CD8-positive, alpha-beta T cell (primary cell): ENCODE measurements at regions of chr3 and their contacts with region 1.

Region 1: DNA sequence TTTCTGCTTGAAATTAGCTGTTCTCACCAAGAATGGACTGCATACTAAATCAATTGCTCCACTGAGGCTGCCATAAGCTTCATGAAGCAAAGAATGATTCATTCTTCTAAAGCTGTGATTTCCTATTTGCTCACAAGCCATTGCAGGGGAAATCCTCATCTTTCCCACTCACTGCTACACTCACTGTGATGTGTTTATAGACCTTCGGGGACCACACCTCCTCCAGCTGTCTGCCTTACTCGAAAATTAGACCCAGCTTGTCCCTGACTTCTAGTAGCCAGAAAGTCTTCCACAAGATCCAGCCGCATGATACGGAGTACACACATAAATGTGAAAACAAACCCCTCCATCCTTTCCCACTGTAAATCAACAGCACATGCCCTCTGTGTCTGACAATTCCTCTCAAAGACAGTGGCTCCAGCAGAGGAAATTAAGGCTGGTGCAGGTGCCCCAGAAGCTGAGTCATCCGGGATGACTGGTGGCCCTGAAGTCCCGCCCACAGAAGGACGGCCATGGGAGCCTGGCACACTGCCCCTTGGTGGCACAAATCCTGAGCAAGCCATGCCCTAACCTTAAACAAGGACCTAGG is 172.0 kb downstream of the STT3B start:
- DNase-seq: no peak
- ATAC-seq: no peak
- H3K4me3 ChIP-seq: no peak overlapping the region
- H3K4me3 Mint-ChIP-seq: no peak overlapping the region
- H3K27ac ChIP-seq: no peak overlapping the region
- H3K27ac Mint-ChIP-seq: no peak overlapping the region
- H3K4me1 ChIP-seq: no peaks in the 10 kb centered on the region
- H3K4me1 Mint-ChIP-seq: no peaks in the 10 kb centered on the region
- H3K27me3 ChIP-seq: no peaks in the 10 kb centered on the region
- H3K27me3 Mint-ChIP-seq: peaks cover 15% of the 10 kb centered on the region
- CTCF ChIP-seq: no peak

Region 2: DNA sequence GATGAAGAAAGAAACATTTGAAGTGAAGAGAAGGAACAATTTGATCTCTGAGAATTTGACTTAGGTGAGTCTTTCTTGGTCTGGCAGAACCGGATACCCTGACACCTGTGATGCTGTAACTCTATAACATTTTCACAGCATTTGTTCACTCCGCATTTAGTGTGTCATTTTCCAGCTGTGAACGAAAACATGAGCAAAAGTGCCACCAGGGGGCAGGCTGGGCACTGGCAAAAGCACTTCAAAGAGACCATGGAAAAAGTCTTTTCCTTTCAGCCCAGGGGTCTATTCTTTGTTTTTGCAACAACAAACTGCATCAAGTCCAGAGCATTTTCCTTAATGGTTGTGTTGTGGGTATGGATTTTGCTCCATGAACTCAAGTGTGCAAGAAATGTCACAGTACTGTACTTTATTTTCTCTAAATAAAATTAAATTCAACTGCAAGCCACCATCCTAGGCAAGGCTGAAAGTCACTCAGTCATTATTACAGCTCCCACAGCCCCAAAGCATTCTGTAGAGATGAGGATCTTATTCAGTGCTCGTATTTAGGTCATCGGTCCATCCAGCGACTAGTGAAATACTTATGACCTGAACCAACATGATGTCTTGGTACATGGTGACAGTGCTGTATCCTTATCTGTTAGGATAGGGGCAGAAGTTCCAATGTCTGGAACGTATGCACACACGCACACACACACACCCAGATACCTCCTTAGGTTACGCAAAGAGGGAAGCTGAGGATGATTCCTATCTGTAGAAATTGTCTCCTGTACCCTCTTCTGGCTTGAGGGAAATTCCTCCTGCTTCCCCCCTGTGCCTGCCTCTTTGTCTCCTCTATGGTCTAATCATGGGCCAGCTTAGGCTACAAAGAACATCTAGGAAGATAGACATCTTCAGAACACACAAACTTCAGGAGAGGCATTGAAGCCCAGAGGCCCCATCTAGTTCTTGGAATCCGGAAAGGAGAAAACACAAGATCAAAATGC is 935.7 kb before region 1 on chr3:
- CTCF ChIA-PET with region 1: no interaction called
- POLR2A ChIA-PET with region 1: no interaction called
- intact Hi-C with region 1: loop called in 1 of 2 experiments (anchors 5 kb)
- DNase-seq: peak; percentile 34 to 80 (median 68)
- ATAC-seq: peak; percentile 48
- H3K4me3 ChIP-seq: no peak overlapping the region
- H3K4me3 Mint-ChIP-seq: no peak overlapping the region
- H3K27ac ChIP-seq: no peak overlapping the region
- H3K27ac Mint-ChIP-seq: no peak overlapping the region
- H3K4me1 ChIP-seq: no peaks in the 10 kb centered on the region
- H3K4me1 Mint-ChIP-seq: peaks cover 3% of the 10 kb centered on the region
- H3K27me3 ChIP-seq: no peaks in the 10 kb centered on the region
- H3K27me3 Mint-ChIP-seq: peaks cover 6% of the 10 kb centered on the region
- CTCF ChIP-seq: peak; percentile 76